Activated CD8-positive, alpha-beta T cell treated with anti-CD3 and anti-CD28 coated beads for 36 hours (primary cell): ENCODE measurements at regions of chr14 and their contacts with region 1.

Region 1: DNA sequence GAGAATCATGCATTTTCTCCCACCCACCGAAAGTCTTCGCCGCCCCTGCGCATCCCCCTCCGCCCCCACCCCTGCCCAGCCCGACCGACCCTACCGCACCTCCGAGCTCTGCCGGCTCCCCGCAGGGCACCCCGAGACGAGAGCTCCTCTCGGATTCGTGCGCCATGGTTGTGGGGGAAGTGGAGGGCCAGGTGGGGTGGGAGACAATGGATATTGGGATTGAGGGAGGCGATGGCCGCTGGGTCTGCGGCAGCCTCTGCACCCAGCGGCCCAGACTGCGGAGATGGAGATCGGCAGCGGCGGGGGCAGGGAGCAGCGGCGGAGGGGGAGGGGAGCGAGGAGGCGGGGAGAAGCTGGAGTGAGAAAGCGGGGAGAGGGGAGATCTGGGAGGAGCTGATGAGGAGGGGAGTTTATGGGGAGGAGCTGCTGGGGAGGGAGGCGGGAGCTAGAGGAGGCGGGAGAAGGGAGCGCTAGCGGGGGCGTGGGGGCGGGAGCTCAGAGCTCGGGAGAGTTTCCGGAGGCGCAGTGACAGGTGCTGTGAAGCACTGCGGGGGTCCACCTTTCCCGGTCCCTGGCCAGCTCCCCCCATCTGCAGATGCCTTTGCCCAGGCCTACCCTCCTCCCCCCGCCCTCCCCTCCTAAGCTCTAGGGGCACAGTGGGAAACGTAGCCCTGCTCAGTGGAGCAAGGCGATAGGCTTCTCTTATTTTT is at the start of gene SALL2:
- DNase-seq: peak; percentile 83
- ATAC-seq: peak; percentile 90
- H3K4me3 Mint-ChIP-seq: peak within 1 kb of the TSS; percentile 70
- H3K27ac Mint-ChIP-seq: peak within 1 kb of the TSS; percentile 75
- H3K4me1 Mint-ChIP-seq: peaks cover 16% of the 10 kb centered on the region
- H3K27me3 Mint-ChIP-seq: no peaks in the 10 kb centered on the region
- CTCF ChIP-seq: no peak
- total RNA-seq, gene SALL2: 2.9 to 3.5 TPM

Region 2: GRCh38 chr14:21510735-21511657 is 15.1 kb before region 1 on chr14 and contains the start of gene METTL3:
- CTCF ChIA-PET with region 1: interaction called, 5 read pairs
- POLR2A ChIA-PET with region 1: interaction called, 62 read pairs
- intact Hi-C with region 1: no loop called
- DNase-seq: peak; percentile 96
- ATAC-seq: peak; percentile 99
- H3K4me3 Mint-ChIP-seq: peak within 1 kb of the TSS; percentile 100
- H3K27ac Mint-ChIP-seq: peak within 1 kb of the TSS; percentile 99
- H3K4me1 Mint-ChIP-seq: peaks cover 32% of the 10 kb centered on the region
- H3K27me3 Mint-ChIP-seq: no peaks in the 10 kb centered on the region
- CTCF ChIP-seq: no peak
- total RNA-seq, gene METTL3: 66.7 to 70.8 TPM

Region 3: DNA sequence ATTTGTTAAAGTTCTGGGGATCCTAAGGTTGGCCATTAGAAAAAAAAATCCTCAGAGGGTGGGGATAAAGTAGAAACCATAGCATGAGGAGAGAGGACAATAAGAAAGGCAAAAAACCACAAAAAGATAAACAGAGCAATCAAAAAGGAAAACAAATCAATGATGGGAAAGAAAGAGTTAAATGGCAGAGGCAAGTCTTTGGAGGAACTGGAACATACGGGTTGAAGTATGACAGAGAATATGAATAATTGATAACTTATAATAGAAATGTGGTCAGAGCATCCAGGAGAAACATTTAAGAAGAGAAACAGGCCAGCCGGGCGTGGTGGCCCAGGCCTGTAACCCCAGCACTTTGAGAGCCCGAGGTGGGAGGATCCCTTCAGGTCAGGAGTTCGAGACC is 17.8 kb after region 1 on chr14:
- CTCF ChIA-PET with region 1: no interaction called
- POLR2A ChIA-PET with region 1: no interaction called
- intact Hi-C with region 1: no loop called
- DNase-seq: no peak
- ATAC-seq: no peak
- H3K4me3 Mint-ChIP-seq: no peak overlapping the region
- H3K27ac Mint-ChIP-seq: no peak overlapping the region
- H3K4me1 Mint-ChIP-seq: no peaks in the 10 kb centered on the region
- H3K27me3 Mint-ChIP-seq: peaks cover 10% of the 10 kb centered on the region
- CTCF ChIP-seq: no peak